ENCODE measurements at regions of chr22 and their contacts with region 1.

Region 1: DNA sequence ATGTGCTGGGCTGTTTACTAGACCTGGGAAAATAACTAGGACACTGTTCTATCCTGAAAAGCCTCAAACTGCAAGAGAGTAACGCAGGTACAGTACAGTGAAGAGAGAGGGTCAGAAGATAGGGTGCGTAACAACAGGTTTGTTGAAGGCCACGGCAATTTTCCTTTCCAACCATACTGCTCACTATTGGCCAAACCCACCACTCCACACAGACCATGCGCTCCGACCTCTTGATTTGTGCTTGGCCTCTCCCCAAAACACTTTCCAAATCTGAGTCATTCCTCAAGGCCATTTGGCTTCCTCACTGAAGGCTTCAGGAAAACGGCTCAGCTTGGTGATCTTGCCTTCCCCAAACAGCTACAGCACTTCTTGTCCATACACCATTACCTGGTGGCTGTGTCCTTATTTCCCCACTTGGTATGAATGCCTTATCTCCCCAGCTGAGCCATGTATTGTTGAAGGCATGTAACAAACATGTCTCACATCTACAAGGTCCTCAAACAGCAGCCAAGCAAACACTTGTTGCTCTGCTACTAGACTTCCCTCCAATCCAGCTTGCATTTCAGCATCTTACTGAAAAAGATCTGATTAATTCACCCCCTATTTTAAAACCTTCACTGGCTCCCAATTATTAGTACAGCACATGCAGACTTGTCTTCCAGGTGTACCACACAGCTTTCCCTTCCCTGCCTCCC is 40.9 kb downstream of the TCF20 start:
- DNase-seq: no peak
- H3K4me3 ChIP-seq: no peak overlapping the region
- H3K27ac ChIP-seq: no peak overlapping the region
- H3K4me1 ChIP-seq: peaks cover 0 to 7% of the 10 kb centered on the region in 2 donors
- H3K27me3 ChIP-seq: no peaks in the 10 kb centered on the region
- CTCF ChIP-seq: no peak
- POLR2A ChIP-seq: no peak

Region 2: GRCh38 chr22:41857155-41857859 is 372.3 kb before region 1 on chr22:
- intact Hi-C with region 1: loop called (anchors 10 kb)
- DNase-seq: no peak
- H3K4me3 ChIP-seq: no peak overlapping the region
- H3K27ac ChIP-seq: no peak overlapping the region
- H3K4me1 ChIP-seq: no peaks in the 10 kb centered on the region
- H3K27me3 ChIP-seq: no peaks in the 10 kb centered on the region
- CTCF ChIP-seq: peak in 1 of 3 donors; percentile 26
- POLR2A ChIP-seq: no peak

Region 3: DNA sequence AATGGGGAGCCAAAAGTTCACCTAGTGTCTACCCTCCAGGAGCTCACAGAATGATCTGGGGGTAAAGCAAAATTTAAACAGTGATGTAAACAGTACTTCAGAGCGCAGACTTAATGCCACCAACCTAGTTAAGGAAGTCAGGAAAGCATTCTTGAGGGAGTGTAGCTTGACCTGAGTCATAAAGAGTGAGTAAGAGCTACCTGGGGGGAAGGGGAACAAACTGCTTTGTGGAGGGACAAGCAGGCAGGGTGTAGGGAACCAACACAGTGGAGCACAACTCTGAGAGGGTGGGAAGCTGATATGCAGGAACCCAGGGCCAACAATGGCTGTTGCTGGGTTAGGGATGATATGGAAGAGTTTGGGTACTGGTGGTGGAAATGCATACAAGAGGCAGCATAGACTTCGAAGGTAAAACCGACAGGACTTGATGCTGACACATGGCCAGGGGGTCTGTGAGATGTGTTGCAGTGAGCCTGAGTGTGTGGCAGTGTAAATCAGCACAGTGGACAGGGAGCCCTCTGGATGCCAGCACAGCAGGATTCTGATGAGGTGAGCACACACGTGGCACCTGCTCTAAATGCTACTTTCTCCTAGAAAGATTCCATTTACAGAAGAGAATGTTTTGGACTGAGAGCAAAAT is 40.7 kb before region 1 on chr22:
- intact Hi-C with region 1: no loop called
- DNase-seq: no peak
- H3K4me3 ChIP-seq: no peak overlapping the region
- H3K27ac ChIP-seq: no peak overlapping the region
- H3K4me1 ChIP-seq: no peaks in the 10 kb centered on the region
- H3K27me3 ChIP-seq: no peaks in the 10 kb centered on the region
- CTCF ChIP-seq: no peak
- POLR2A ChIP-seq: no peak

Region 4: GRCh38 chr22:42300259-42301076 is 70.9 kb after region 1 on chr22:
- intact Hi-C with region 1: loop called (anchors 2 kb)
- DNase-seq: no peak
- H3K4me3 ChIP-seq: peak overlapping the region in 2 of 3 donors; percentile 4 to 11
- H3K27ac ChIP-seq: no peak overlapping the region
- H3K4me1 ChIP-seq: peaks cover 0 to 5% of the 10 kb centered on the region in 2 donors
- H3K27me3 ChIP-seq: no peaks in the 10 kb centered on the region
- CTCF ChIP-seq: no peak
- POLR2A ChIP-seq: no peak

Region 5: DNA sequence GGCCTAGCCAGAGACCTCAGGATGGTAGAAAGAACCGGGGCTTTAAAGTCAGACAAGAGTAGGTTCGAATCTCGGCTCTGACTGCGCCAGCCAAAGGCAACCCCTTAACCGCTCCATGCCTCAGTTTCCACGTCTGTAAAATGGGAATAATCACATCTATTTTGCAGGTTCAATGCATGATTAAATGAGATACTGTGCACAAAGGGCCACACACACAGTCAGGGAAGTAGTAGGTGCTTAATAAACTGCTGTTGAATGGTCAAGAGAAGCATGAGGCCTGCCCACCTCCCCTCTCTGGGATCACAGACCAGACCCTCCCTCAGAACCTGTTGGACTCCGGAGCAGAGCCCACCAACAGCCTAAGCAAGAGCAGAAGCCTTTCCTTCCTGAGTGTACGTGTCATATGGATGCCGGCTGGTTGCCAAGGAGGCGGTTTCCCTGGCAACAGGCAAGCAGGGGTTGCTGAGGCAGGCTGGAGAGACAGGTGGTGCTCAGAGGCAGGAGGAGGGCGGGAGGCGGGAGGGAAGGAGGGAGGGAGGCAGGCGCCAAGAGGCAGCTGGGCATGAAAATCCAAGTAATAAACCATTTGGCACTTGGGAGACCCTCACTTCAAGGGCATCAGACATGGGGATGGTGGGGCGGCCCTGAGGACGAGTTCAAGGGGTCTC is 158.7 kb after region 1 on chr22:
- intact Hi-C with region 1: no loop called
- DNase-seq: no peak
- H3K4me3 ChIP-seq: no peak overlapping the region
- H3K27ac ChIP-seq: no peak overlapping the region
- H3K4me1 ChIP-seq: no peaks in the 10 kb centered on the region
- H3K27me3 ChIP-seq: no peaks in the 10 kb centered on the region
- CTCF ChIP-seq: no peak
- POLR2A ChIP-seq: no peak

Measured in breast epithelium (tissue), 4 donors.